Endothelial cell of umbilical vein (primary cell): ENCODE measurements at regions of chr4 and their contacts with region 1.

Region 1: DNA sequence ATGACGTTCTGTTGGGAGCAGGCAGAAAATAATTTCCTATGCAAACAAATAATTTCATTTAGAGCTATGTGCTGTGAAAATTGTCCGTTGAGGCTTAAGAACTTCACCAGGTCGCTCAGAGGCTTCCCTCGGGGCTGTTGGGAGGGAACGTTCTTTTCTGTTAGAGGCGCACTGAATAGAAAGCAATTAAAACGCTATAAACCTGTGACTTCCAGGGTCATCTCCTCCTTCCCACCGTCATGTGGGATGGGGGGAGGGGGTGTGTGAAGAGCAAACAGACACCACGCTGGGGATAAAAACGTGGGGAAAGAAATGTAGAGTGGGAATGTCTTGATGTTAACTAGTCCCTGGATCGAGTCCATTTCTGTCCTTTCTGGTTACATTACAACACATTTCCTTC is 35.2 kb upstream of the ZNF518B start:
- DNase-seq: no peak
- H3K4me3 ChIP-seq: no peak overlapping the region
- H3K27ac ChIP-seq: no peak overlapping the region
- H3K4me1 ChIP-seq: no peaks in the 10 kb centered on the region
- H3K27me3 ChIP-seq: peaks cover 2 to 4% of the 10 kb centered on the region in 2 experiments
- CTCF ChIP-seq: no peak
- POLR2A ChIP-seq: no peak

Region 2: DNA sequence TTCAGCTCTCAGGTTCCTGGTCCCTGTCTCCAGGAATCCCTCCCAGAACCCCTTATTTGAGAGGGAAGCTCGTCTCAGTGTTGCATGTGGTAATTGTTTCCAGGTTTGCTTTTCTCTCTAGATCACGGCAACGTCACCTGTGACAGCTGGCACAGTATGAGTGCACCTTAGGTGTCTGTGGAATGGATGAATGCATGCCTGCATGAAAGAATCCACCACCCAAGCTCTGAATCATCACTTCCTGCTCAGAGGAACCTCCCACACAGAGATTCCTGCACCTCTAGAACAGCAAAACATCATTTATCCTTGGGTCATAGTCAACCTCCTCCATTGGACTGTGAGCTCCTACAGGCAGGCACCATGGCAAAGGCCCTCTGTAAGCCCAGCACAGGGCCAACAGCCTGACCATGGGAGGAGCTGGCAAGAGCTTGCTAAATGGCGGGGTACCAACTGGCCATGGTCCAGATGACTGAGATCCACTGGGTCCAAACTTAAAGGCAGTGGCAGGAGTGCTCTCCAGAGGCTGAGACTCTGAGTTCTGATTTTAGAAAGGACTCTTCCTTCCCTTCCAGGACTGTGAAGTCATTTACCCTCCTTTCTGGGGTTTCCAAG is 587.4 kb before region 1 on chr4:
- CTCF ChIA-PET with region 1: no interaction called
- POLR2A ChIA-PET with region 1: no interaction called
- dilution Hi-C with region 1: no loop called
- intact Hi-C with region 1: no loop called
- DNase-seq: no peak
- H3K4me3 ChIP-seq: no peak overlapping the region
- H3K27ac ChIP-seq: no peak overlapping the region
- H3K4me1 ChIP-seq: no peaks in the 10 kb centered on the region
- H3K27me3 ChIP-seq: no peaks in the 10 kb centered on the region
- CTCF ChIP-seq: no peak
- POLR2A ChIP-seq: no peak

Region 3: DNA sequence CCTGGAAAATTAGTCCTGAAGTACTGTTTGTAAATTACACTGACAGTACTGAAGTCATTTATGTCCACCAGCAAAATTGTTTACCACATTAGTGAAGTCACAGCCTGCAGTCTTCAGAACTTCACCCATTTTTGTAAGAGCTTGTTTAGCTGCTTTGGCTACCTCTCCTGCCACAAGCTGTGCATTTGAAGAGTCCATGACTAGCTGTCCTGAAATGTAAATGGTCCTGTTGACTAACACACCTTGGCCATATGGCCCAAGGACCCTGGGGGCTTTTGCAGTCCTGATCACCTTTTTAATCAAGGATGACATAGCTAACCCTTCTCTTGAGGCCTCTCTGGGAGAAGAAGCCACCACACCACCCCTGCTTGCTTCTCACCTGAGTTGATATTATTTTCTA is 13.8 kb before region 1 on chr4:
- CTCF ChIA-PET with region 1: interaction called, 12 read pairs
- POLR2A ChIA-PET with region 1: no interaction called
- dilution Hi-C with region 1: no loop called
- intact Hi-C with region 1: no loop called
- DNase-seq: no peak
- H3K4me3 ChIP-seq: no peak overlapping the region
- H3K27ac ChIP-seq: no peak overlapping the region
- H3K4me1 ChIP-seq: no peaks in the 10 kb centered on the region
- H3K27me3 ChIP-seq: peaks cover 0 to 2% of the 10 kb centered on the region in 2 experiments
- CTCF ChIP-seq: no peak
- POLR2A ChIP-seq: no peak

Region 4: DNA sequence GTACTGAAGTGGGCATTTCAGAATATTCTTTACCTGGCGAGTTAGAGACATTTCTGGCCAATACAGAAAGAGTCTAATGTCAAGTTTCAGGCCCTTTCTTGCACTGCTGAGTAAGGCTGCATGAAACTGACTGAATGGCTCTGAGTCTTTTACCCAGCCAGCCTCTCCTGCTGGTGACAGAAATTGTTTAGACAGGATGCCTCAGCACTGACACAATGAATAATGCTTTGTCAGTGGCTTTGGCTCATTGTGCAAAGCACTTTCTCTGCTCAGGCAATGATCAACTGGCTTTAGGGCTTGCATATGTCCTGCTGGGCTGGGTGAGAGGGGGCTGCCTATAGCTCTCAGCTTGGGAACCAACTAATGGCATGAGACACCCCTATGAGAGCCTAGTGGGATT is 146.6 kb after region 1 on chr4:
- CTCF ChIA-PET with region 1: no interaction called
- POLR2A ChIA-PET with region 1: no interaction called
- dilution Hi-C with region 1: no loop called
- intact Hi-C with region 1: no loop called
- DNase-seq: no peak
- H3K4me3 ChIP-seq: no peak overlapping the region
- H3K27ac ChIP-seq: no peak overlapping the region
- H3K4me1 ChIP-seq: no peaks in the 10 kb centered on the region
- H3K27me3 ChIP-seq: peaks cover 3 to 4% of the 10 kb centered on the region in 2 experiments
- CTCF ChIP-seq: no peak
- POLR2A ChIP-seq: no peak